Mammary epithelial cell (primary cell): ENCODE measurements at regions of chr5 and their contacts with region 1.

Region 1: DNA sequence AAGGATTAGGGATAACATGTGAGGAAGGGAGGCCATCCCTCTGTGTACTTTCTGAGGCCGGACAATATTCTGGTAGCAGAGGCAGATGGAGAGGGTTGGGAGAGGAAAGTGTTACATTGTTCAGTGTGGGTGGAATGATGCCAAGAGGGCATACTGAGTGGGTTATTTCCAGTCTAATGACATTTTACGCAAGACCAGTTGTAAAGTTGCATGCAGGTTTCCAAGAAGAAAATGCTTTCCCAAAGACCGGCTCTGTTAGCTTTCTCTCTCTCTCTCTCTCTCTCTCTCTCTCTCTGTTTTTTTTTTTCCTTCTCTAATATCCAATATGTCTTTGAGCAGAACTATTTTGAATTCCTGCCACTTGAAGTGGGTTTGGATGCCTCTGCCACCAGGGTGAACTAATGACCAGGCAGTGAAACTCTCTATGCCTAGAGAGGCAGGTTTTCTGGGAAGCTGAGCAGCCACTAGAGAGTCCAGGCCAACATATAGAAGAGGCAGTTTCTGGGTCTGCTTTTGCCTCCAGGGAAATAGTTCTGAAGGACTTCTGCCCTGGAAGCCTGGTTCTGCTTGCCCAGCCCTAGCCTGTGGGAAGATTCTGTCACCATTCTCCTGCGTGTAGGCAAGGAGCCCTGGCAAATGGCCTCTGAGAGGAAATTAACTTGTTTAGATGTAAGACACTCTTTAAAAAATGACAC is 24.4 kb upstream of the ZNF366 start:
- DNase-seq: no peak
- H3K4me3 ChIP-seq: no peak overlapping the region
- H3K27ac ChIP-seq: no peak overlapping the region
- H3K4me1 ChIP-seq: no peaks in the 10 kb centered on the region
- H3K27me3 ChIP-seq: no peaks in the 10 kb centered on the region
- CTCF ChIP-seq: peak in 1 of 2 donors; percentile 28

Region 2: DNA sequence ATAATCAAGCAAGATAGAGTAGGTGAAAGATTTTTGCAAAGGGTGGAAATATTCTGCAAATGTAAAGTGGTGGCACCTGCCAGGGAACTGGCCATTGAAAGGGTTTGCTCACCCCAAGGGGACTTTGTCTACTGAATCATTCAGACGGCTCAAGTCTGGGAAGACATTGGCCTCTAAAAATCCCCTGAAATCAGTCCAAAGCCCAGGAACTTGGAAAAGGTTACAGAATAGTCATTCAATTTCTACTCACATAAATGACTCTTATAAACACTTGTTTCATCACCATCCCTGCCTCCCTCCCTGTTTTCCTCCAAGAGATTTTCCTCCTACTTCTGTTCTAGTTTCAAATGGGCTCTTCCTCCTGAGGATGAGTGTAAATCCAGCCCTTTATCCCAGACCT is 53.0 kb before region 1 on chr5:
- CTCF ChIA-PET with region 1: no interaction called
- dilution Hi-C with region 1: no loop called
- in situ Hi-C with region 1: no loop called
- intact Hi-C with region 1: no loop called
- DNase-seq: no peak
- H3K4me3 ChIP-seq: no peak overlapping the region
- H3K27ac ChIP-seq: no peak overlapping the region
- H3K4me1 ChIP-seq: peaks cover 9% of the 10 kb centered on the region
- H3K27me3 ChIP-seq: no peaks in the 10 kb centered on the region
- CTCF ChIP-seq: no peak

Region 3: GRCh38 chr5:72600391-72600981 is 68.8 kb after region 1 on chr5:
- CTCF ChIA-PET with region 1: no interaction called
- dilution Hi-C with region 1: no loop called
- in situ Hi-C with region 1: no loop called
- intact Hi-C with region 1: loop called (anchors 5 kb)
- DNase-seq: peak; percentile 96
- H3K4me3 ChIP-seq: no peak overlapping the region
- H3K27ac ChIP-seq: peak overlapping the region; percentile 87
- H3K4me1 ChIP-seq: peaks cover 54% of the 10 kb centered on the region
- H3K27me3 ChIP-seq: no peaks in the 10 kb centered on the region
- CTCF ChIP-seq: no peak

Region 4: DNA sequence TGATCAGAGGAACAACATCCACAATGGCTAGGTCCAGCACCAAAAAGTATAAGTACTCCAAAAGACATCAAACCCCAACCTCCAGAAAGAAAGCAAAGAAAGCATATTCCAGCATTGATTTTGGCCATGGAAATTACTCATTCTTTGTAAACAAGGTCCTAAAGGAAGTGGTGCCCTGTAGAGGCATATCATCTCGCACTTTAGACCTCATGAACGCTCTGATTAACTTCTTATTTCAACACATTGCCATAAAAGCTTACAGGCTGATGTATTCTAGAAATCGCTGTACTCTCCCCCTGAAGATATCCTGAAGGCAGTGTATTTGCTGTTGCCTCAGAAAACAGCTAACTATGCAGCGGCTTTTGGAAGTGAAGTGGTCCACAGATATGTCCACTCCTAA is 202.2 kb after region 1 on chr5:
- CTCF ChIA-PET with region 1: no interaction called
- dilution Hi-C with region 1: no loop called
- in situ Hi-C with region 1: no loop called
- intact Hi-C with region 1: no loop called
- DNase-seq: no peak
- H3K4me3 ChIP-seq: no peak overlapping the region
- H3K27ac ChIP-seq: no peak overlapping the region
- H3K4me1 ChIP-seq: no peaks in the 10 kb centered on the region
- H3K27me3 ChIP-seq: peaks cover 1% of the 10 kb centered on the region
- CTCF ChIP-seq: no peak